Mammary epithelial cell (primary cell): ENCODE measurements at regions of chr10 and their contacts with region 1.

Region 1: GRCh38 chr10:23331567-23332290 is 12.9 kb downstream of the C10orf67 start:
- DNase-seq: peak; percentile 90
- H3K4me3 ChIP-seq: no peak overlapping the region
- H3K27ac ChIP-seq: peak overlapping the region; percentile 54
- H3K4me1 ChIP-seq: peaks cover 8% of the 10 kb centered on the region
- H3K27me3 ChIP-seq: no peaks in the 10 kb centered on the region
- CTCF ChIP-seq: no peak

Region 2: GRCh38 chr10:23146258-23146657 is 185.5 kb before region 1 on chr10:
- CTCF ChIA-PET with region 1: no interaction called
- dilution Hi-C with region 1: no loop called
- in situ Hi-C with region 1: no loop called
- intact Hi-C with region 1: no loop called
- DNase-seq: no peak
- H3K4me3 ChIP-seq: no peak overlapping the region
- H3K27ac ChIP-seq: no peak overlapping the region
- H3K4me1 ChIP-seq: no peaks in the 10 kb centered on the region
- H3K27me3 ChIP-seq: no peaks in the 10 kb centered on the region
- CTCF ChIP-seq: no peak

Region 3: DNA sequence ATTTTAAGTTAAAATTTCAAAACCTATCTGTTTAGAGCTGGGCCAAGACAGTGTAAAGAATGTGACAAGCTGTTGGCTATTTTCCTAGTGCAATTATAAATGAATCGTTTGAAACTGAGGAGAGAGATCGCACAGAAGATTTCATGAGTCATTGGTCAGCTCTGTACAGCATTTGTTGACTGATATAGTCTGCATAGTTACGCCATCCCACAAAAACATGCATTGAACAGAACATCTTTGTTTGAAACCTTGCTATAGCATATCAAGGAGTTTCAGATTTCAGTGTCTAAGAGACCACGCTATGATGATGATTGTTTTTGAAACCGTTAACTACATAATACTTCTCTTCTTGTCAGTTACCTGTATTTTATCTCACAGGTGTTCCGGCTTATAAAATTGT is 14.2 kb after region 1 on chr10:
- CTCF ChIA-PET with region 1: no interaction called
- dilution Hi-C with region 1: no loop called
- in situ Hi-C with region 1: no loop called
- intact Hi-C with region 1: loop called (anchors 2 kb)
- DNase-seq: peak; percentile 97
- H3K4me3 ChIP-seq: no peak overlapping the region
- H3K27ac ChIP-seq: peak overlapping the region; percentile 95
- H3K4me1 ChIP-seq: peaks cover 25% of the 10 kb centered on the region
- H3K27me3 ChIP-seq: no peaks in the 10 kb centered on the region
- CTCF ChIP-seq: no peak

Region 4: DNA sequence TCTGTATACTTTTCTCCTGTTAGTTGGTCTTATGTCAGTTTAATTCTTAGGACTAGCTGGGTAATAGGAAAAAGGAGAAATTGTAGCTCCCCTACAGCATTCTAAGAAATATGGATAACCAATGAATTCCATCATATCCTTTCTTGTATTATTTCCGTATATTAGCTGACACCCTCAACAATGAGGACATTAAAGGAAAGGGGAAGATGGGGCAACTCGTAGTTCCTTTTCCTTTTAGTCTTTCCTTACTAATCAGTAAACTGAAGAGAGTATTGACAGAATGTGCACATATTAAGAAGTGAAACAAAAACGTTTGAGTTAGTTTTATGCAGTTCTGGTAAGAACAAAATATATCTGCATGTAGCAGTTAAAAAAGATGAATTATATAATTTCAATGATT is 48.0 kb after region 1 on chr10:
- CTCF ChIA-PET with region 1: no interaction called
- dilution Hi-C with region 1: no loop called
- in situ Hi-C with region 1: no loop called
- intact Hi-C with region 1: loop called (anchors 2 kb)
- DNase-seq: no peak
- H3K4me3 ChIP-seq: no peak overlapping the region
- H3K27ac ChIP-seq: no peak overlapping the region
- H3K4me1 ChIP-seq: peaks cover 22% of the 10 kb centered on the region
- H3K27me3 ChIP-seq: no peaks in the 10 kb centered on the region
- CTCF ChIP-seq: no peak